Transverse colon (tissue), 4 donors: ENCODE measurements at regions of chrX and their contacts with region 1.

Region 1: GRCh38 chrX:103686199-103687072 is at the start of gene MORF4L2:
- DNase-seq: peak; percentile 93
- H3K4me3 ChIP-seq: peak within 1 kb of the TSS; percentile 43 to 64 (median 52)
- H3K27ac ChIP-seq: peak within 1 kb of the TSS; percentile 85 to 95 (median 94)
- H3K4me1 ChIP-seq: peaks cover 0 to 10% (median 2%) of the 10 kb centered on the region in 4 donors
- H3K27me3 ChIP-seq: no peaks in the 10 kb centered on the region
- CTCF ChIP-seq: no peak
- EP300 ChIP-seq: no peak
- POLR2A ChIP-seq: peak; percentile 91
- total RNA-seq, gene MORF4L2: 171 to 235 (median 185) TPM

Region 2: DNA sequence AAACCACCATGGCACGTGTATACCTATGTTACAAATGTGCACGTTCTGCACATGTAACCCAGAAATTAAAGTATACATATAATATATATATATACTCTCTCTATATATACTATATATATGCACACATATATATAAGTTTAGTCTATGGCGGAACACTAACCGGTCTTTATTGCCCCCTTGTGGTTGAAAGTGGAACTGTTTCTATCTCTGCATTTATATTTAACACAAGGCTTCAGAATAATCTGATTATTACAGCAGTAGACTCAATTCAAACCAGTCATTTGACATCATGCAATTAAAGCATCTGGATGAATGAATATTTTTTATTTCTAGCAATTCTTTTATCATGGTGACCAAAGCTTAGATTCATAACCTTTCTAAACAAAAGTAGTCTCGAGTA is 131.1 kb after region 1 on chrX:
- in situ Hi-C with region 1: no loop called
- intact Hi-C with region 1: loop called (anchors 10 kb)
- DNase-seq: no peak
- H3K4me3 ChIP-seq: no peak overlapping the region
- H3K27ac ChIP-seq: no peak overlapping the region
- H3K4me1 ChIP-seq: no peaks in the 10 kb centered on the region
- H3K27me3 ChIP-seq: no peaks in the 10 kb centered on the region
- CTCF ChIP-seq: peak; percentile 53 to 93 (median 71)
- EP300 ChIP-seq: no peak
- POLR2A ChIP-seq: no peak

Region 3: DNA sequence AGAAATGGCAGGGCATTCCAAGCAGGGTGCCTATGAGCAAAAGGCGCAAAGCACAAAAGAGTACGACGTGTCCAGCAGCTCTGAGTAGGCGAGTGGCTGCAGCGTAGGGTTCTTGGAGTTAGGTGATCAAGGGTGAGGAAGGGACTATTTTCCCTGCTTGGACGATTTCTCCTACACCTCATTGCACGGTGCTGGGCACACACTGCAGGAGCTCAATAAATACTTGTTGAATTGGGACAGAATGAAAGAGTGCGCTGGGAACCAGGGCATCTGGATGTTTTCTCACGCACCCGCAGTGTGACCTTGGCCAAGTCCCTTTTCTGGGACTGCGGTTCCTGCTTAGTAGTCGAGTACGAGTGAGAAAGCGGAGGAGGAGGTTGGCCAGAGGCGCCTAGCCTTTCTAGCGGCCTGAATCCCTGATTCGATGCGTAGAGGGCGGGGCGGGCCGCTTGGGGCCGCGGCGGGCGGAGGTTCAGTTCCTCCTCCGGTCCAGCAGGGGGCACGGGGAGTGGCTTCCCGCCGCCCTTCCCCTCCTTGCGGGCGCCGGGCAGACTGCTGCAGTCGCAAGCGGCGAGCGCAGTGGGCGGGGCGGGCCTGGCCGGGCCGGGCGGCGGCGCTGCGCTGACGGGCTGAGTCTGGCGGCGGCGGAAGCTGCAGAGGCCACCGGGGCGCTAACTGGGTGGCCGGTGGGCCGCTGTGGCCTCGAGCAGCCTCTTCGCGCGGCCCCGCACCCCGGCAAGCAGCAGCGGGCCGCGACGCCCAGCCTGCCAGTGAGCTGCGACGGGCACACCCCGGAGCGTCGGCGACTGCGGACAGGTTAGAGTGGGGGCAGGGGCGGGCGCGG is 479.7 kb after region 1 on chrX and contains the start of gene FAM199X:
- in situ Hi-C with region 1: loop called in 1 of 4 experiments (anchors 25 kb)
- intact Hi-C with region 1: no loop called
- DNase-seq: peak; percentile 90
- H3K4me3 ChIP-seq: peak within 1 kb of the TSS; percentile 61 to 71 (median 66)
- H3K27ac ChIP-seq: peak within 1 kb of the TSS; percentile 88 to 94 (median 89)
- H3K4me1 ChIP-seq: peaks cover 0 to 17% (median 7%) of the 10 kb centered on the region in 4 donors
- H3K27me3 ChIP-seq: no peaks in the 10 kb centered on the region
- CTCF ChIP-seq: peak; percentile 57 to 83 (median 66)
- EP300 ChIP-seq: no peak
- POLR2A ChIP-seq: peak; percentile 44
- total RNA-seq, gene FAM199X: 10.8 to 37.2 (median 25.4) TPM